ENCODE measurements at regions of chr5 and their contacts with region 1.

Region 1: DNA sequence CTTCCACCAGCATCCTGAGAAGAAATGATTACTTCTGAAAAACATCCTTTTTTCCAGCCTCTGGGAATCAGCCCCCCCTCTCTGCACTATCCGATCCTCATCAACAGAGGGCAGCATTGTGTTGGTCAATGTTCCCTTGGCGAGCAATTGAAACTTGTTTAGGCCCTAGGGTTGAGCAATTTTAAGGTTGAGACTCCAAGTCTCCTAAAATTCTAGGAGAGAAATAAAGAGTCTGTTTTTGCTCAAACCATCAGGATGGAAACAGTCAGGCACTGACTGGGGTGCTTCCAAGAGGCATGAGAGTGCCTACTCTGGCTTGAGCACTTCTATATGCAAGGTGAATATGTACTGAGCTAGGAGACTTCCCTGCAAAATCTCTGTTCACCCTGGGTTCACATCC is 12.4 kb upstream of the CYFIP2 start:
- DNase-seq: no peak
- ATAC-seq: peak; percentile 82
- H3K4me3 ChIP-seq: peak overlapping the region; percentile 4; the same call in 1 of the 2 replicates
- H3K27ac ChIP-seq: no peak overlapping the region; the same call in 1 of the 2 replicates
- H3K4me1 ChIP-seq: peaks cover 15% of the 10 kb centered on the region
- H3K27me3 ChIP-seq: no peaks in the 10 kb centered on the region
- CTCF ChIP-seq: peak; percentile 85 to 97 (median 88)
- EP300 ChIP-seq: no peak
- POLR2A ChIP-seq: no peak
- RAD21 ChIP-seq: peak; percentile 97

Region 2: DNA sequence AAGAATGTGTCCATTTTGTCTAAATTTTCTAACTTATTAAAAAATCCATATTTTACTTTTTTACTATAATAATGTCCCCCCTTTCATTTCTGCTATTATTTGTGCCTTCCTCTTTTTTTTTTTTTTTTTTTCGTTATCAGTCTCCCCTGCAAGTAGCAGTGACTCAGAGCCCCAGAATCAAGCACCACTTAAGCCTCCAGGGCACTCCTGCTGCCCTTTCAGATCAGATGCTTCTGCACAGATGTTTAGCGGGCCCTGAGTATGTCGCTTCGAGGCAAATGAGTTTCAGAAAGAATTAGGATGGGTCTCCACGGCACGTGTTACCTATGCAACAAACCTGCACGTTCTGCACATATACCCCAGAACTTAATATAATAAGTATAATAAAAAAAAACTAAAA is 122.6 kb before region 1 on chr5:
- CTCF ChIA-PET with region 1: interaction called, 12 read pairs
- POLR2A ChIA-PET with region 1: no interaction called
- RAD21 ChIA-PET with region 1: no interaction called
- SMC1A ChIA-PET with region 1: interaction called, 5 read pairs
- in situ Hi-C with region 1: no loop called
- intact Hi-C with region 1: no loop called
- DNase-seq: no peak
- ATAC-seq: peak; percentile 82
- H3K4me3 ChIP-seq: no peak overlapping the region
- H3K27ac ChIP-seq: no peak overlapping the region
- H3K4me1 ChIP-seq: peaks cover 5% of the 10 kb centered on the region; the same call in 1 of the 2 replicates
- H3K27me3 ChIP-seq: no peaks in the 10 kb centered on the region
- CTCF ChIP-seq: no peak
- EP300 ChIP-seq: no peak
- POLR2A ChIP-seq: no peak
- RAD21 ChIP-seq: peak; percentile 11; the same call in 1 of the 2 replicates

Region 3: GRCh38 chr5:157167214-157167621 is 86.3 kb before region 1 on chr5:
- CTCF ChIA-PET with region 1: interaction called, 29 read pairs
- POLR2A ChIA-PET with region 1: interaction called, 7 read pairs
- RAD21 ChIA-PET with region 1: interaction called, 44 read pairs
- SMC1A ChIA-PET with region 1: interaction called, 47 read pairs
- in situ Hi-C with region 1: no loop called
- intact Hi-C with region 1: loop called (anchors 1 kb)
- DNase-seq: peak; percentile 16
- ATAC-seq: peak; percentile 72
- H3K4me3 ChIP-seq: no peak overlapping the region
- H3K27ac ChIP-seq: no peak overlapping the region
- H3K4me1 ChIP-seq: peaks cover 10% of the 10 kb centered on the region
- H3K27me3 ChIP-seq: no peaks in the 10 kb centered on the region; a peak in 1 of 4 replicates
- CTCF ChIP-seq: no peak
- EP300 ChIP-seq: no peak
- POLR2A ChIP-seq: no peak
- RAD21 ChIP-seq: no peak

Region 4: GRCh38 chr5:157219491-157220271 is 33.9 kb before region 1 on chr5:
- CTCF ChIA-PET with region 1: interaction called, 53 read pairs
- POLR2A ChIA-PET with region 1: interaction called, 6 read pairs
- RAD21 ChIA-PET with region 1: interaction called, 52 read pairs
- SMC1A ChIA-PET with region 1: interaction called, 45 read pairs
- in situ Hi-C with region 1: no loop called
- intact Hi-C with region 1: loop called (anchors 2 kb)
- DNase-seq: peak; percentile 50
- ATAC-seq: peak; percentile 75
- H3K4me3 ChIP-seq: no peak overlapping the region
- H3K27ac ChIP-seq: peak overlapping the region; percentile 54
- H3K4me1 ChIP-seq: peaks cover 53% of the 10 kb centered on the region
- H3K27me3 ChIP-seq: no peaks in the 10 kb centered on the region
- CTCF ChIP-seq: no peak
- EP300 ChIP-seq: peak; percentile 27 to 78; a peak in 2 of 4 replicates
- POLR2A ChIP-seq: no peak
- RAD21 ChIP-seq: 0 out of 2 replicates have a peak, but pooled peaks have one; percentile 12

Region 5: GRCh38 chr5:157271740-157272271 is 18.3 kb after region 1 on chr5:
- CTCF ChIA-PET with region 1: interaction called, 60 read pairs
- POLR2A ChIA-PET with region 1: interaction called, 7 read pairs
- RAD21 ChIA-PET with region 1: interaction called, 99 read pairs
- SMC1A ChIA-PET with region 1: interaction called, 70 read pairs
- in situ Hi-C with region 1: no loop called
- intact Hi-C with region 1: no loop called
- DNase-seq: peak; percentile 93
- ATAC-seq: peak; percentile 80
- H3K4me3 ChIP-seq: peak overlapping the region; percentile 60; the same call in 1 of the 2 replicates
- H3K27ac ChIP-seq: peak overlapping the region; percentile 97
- H3K4me1 ChIP-seq: peaks cover 56% of the 10 kb centered on the region
- H3K27me3 ChIP-seq: no peaks in the 10 kb centered on the region
- CTCF ChIP-seq: no peak
- EP300 ChIP-seq: peak; percentile 72 to 75; a peak in 3 of 4 replicates
- POLR2A ChIP-seq: peak; percentile 82
- RAD21 ChIP-seq: no peak

Region 6: GRCh38 chr5:157328277-157328912 is 74.8 kb after region 1 on chr5:
- CTCF ChIA-PET with region 1: interaction called, 111 read pairs
- POLR2A ChIA-PET with region 1: no interaction called
- RAD21 ChIA-PET with region 1: interaction called, 29 read pairs
- SMC1A ChIA-PET with region 1: interaction called, 33 read pairs
- in situ Hi-C with region 1: no loop called
- intact Hi-C with region 1: no loop called
- DNase-seq: no peak
- ATAC-seq: peak; percentile 100
- H3K4me3 ChIP-seq: no peak overlapping the region
- H3K27ac ChIP-seq: no peak overlapping the region
- H3K4me1 ChIP-seq: no peaks in the 10 kb centered on the region
- H3K27me3 ChIP-seq: no peaks in the 10 kb centered on the region
- CTCF ChIP-seq: peak; percentile 85 to 94 (median 91)
- EP300 ChIP-seq: no peak
- POLR2A ChIP-seq: no peak
- RAD21 ChIP-seq: peak; percentile 85

Region 7: DNA sequence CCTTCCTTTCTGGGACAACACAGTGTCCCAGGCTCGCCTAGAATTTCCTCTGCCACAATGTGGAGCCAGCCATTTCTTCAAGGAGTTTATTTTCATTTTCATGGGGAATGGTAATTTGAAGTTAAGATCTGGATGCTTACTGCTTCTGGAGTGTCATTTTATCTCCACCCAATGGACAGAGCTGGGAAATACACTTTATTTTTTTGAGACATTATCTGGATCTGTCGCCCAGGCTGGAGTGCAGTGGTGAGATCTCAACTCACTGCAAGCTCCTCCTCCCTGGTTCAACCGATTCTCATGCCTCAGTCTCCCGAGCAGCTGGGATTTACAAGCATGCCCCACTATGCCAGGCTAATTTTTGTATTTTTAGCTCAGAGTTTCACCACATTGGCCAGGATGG is 465.0 kb after region 1 on chr5:
- CTCF ChIA-PET with region 1: interaction called, 14 read pairs
- POLR2A ChIA-PET with region 1: no interaction called
- RAD21 ChIA-PET with region 1: no interaction called
- SMC1A ChIA-PET with region 1: no interaction called
- in situ Hi-C with region 1: no loop called
- intact Hi-C with region 1: no loop called
- DNase-seq: peak; percentile 28
- ATAC-seq: peak; percentile 98
- H3K4me3 ChIP-seq: no peak overlapping the region
- H3K27ac ChIP-seq: no peak overlapping the region
- H3K4me1 ChIP-seq: peaks cover 4% of the 10 kb centered on the region
- H3K27me3 ChIP-seq: no peaks in the 10 kb centered on the region
- CTCF ChIP-seq: peak; percentile 54 to 71 (median 57); a peak in 5 of 6 replicates
- EP300 ChIP-seq: no peak
- POLR2A ChIP-seq: no peak
- RAD21 ChIP-seq: peak; percentile 86